Activated CD8-positive, alpha-beta T cell treated with anti-CD3 and anti-CD28 coated beads for 36 hours (primary cell): ENCODE measurements at regions of chr11 and their contacts with region 1.

Region 1: DNA sequence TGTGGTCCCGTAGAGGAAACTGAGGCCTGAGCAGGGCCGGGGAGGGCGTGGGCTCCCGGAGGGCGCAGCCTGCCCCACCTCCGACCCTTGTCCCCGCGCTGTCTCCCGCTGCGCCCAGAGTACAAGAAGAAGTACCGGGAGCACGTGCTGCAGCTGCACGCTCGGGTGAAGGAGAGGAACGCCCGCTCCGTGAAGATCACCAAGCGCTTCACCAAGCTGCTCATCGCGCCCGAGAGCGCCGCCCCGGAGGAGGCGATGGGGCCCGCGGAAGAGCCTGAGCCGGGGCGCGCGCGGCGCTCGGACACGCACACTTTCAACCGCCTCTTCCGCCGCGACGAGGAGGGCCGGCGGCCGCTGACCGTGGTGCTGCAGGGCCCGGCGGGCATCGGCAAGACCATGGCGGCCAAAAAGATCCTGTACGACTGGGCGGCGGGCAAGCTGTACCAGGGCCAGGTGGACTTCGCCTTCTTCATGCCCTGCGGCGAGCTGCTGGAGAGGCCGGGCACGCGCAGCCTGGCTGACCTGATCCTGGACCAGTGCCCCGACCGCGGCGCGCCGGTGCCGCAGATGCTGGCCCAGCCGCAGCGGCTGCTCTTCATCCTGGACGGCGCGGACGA is 1.9 kb downstream of the NLRP6 start:
- DNase-seq: peak; percentile 67
- ATAC-seq: peak; percentile 28
- H3K4me3 Mint-ChIP-seq: peak overlapping the region; percentile 82
- H3K27ac Mint-ChIP-seq: peak overlapping the region; percentile 68
- H3K4me1 Mint-ChIP-seq: peaks cover 54% of the 10 kb centered on the region
- H3K27me3 Mint-ChIP-seq: peaks cover 10% of the 10 kb centered on the region
- CTCF ChIP-seq: no peak

Region 2: GRCh38 chr11:236774-237767 is 43.0 kb before region 1 on chr11 and contains the start of gene PSMD13:
- CTCF ChIA-PET with region 1: no interaction called
- POLR2A ChIA-PET with region 1: interaction called, 10 read pairs
- intact Hi-C with region 1: no loop called
- DNase-seq: peak; percentile 94
- ATAC-seq: peak; percentile 87
- H3K4me3 Mint-ChIP-seq: peak within 1 kb of the TSS; percentile 95
- H3K27ac Mint-ChIP-seq: peak within 1 kb of the TSS; percentile 99
- H3K4me1 Mint-ChIP-seq: peaks cover 43% of the 10 kb centered on the region
- H3K27me3 Mint-ChIP-seq: no peaks in the 10 kb centered on the region
- CTCF ChIP-seq: no peak
- total RNA-seq, gene PSMD13: 220 to 228 TPM

Region 3: GRCh38 chr11:269146-269890 is 10.8 kb before region 1 on chr11:
- CTCF ChIA-PET with region 1: interaction called, 14 read pairs
- POLR2A ChIA-PET with region 1: interaction called, 75 read pairs
- intact Hi-C with region 1: no loop called
- DNase-seq: peak; percentile 72
- ATAC-seq: peak; percentile 38
- H3K4me3 Mint-ChIP-seq: peak overlapping the region; percentile 89
- H3K27ac Mint-ChIP-seq: peak overlapping the region; percentile 98
- H3K4me1 Mint-ChIP-seq: peaks cover 37% of the 10 kb centered on the region
- H3K27me3 Mint-ChIP-seq: no peaks in the 10 kb centered on the region
- CTCF ChIP-seq: peak; percentile 46

Region 4: GRCh38 chr11:299951-300735 is 20.1 kb after region 1 on chr11:
- CTCF ChIA-PET with region 1: interaction called, 44 read pairs
- POLR2A ChIA-PET with region 1: interaction called, 33 read pairs
- intact Hi-C with region 1: no loop called
- DNase-seq: peak; percentile 68
- ATAC-seq: peak; percentile 14
- H3K4me3 Mint-ChIP-seq: no peak overlapping the region
- H3K27ac Mint-ChIP-seq: no peak overlapping the region
- H3K4me1 Mint-ChIP-seq: peaks cover 49% of the 10 kb centered on the region
- H3K27me3 Mint-ChIP-seq: peaks cover 6% of the 10 kb centered on the region
- CTCF ChIP-seq: no peak

Region 5: GRCh38 chr11:304915-305843 is 25.1 kb after region 1 on chr11:
- CTCF ChIA-PET with region 1: interaction called, 44 read pairs
- POLR2A ChIA-PET with region 1: interaction called, 4 read pairs
- intact Hi-C with region 1: no loop called
- DNase-seq: peak; percentile 85
- ATAC-seq: peak; percentile 25
- H3K4me3 Mint-ChIP-seq: no peak overlapping the region
- H3K27ac Mint-ChIP-seq: no peak overlapping the region
- H3K4me1 Mint-ChIP-seq: peaks cover 49% of the 10 kb centered on the region
- H3K27me3 Mint-ChIP-seq: peaks cover 5% of the 10 kb centered on the region
- CTCF ChIP-seq: peak; percentile 86

Region 6: DNA sequence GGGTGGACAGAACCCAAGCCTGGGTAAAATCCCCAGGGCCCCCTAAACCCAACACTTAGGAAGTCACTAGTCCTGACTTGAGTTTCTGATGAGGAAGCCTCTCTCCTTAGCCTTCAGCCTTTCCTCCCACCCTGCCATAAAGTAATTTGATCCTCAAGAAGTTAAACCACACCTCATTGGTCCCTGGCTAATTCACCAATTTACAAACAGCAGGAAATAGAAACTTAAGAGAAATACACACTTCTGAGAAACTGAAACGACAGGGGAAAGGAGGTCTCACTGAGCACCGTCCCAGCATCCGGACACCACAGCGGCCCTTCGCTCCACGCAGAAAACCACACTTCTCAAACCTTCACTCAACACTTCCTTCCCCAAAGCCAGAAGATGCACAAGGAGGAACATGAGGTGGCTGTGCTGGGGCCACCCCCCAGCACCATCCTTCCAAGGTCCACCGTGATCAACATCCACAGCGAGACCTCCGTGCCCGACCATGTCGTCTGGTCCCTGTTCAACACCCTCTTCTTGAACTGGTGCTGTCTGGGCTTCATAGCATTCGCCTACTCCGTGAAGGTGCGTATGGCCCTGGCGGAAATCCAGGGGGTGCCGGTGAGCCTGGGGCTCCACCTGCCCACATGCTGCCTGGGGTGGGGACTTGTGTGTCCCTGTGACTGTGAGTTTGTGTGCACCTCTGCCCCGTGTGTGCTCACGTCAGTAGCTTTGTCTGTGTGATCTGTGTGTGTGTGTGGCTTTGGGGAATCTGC is 33.9 kb after region 1 on chr11 and contains the start of gene IFITM1:
- CTCF ChIA-PET with region 1: interaction called, 44 read pairs
- POLR2A ChIA-PET with region 1: interaction called, 35 read pairs
- intact Hi-C with region 1: no loop called
- DNase-seq: peak; percentile 79
- ATAC-seq: peak; percentile 45
- H3K4me3 Mint-ChIP-seq: peak within 1 kb of the TSS; percentile 83
- H3K27ac Mint-ChIP-seq: peak within 1 kb of the TSS; percentile 91
- H3K4me1 Mint-ChIP-seq: peaks cover 34% of the 10 kb centered on the region
- H3K27me3 Mint-ChIP-seq: no peaks in the 10 kb centered on the region
- CTCF ChIP-seq: no peak
- total RNA-seq, gene IFITM1: 296 to 304 TPM

Region 7: DNA sequence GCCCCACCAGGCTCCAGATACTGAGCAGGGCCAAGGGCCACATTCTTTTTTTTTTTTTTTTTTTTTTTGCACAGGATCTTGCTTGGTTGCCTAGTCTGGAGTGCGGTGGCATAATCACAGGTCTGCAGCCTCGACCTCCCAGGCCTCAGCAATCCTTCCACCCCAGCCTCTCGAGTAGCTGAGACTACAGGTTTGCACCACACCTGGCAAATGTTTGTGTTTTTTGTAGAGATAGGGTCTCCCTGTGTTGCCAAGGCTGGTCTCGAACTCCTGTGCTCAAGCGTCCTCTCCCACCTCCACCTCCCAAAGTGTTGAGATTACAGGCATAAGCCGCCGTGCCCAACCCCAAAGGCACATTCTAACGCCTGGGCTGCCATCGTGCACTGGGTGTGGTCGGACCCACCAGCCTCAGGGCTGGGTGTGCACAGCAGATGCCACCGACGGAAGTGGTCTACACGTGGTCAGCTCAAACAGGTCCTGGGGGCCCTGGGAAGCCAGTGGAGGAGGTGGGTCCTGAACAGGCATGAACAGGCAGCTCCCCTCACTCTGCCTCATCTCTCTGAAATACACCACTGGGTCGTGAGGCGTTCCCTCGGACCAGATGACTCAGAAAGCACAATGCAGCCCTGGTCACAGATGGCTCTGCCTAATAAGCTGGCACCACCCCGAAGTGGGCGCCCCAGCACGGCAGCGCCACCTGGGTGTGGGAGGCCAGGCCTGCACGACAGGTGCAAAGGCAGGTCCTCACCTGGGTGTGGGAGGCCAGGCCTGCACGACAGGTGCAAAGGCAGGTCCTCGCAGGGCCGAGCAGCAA is 84.1 kb after region 1 on chr11:
- CTCF ChIA-PET with region 1: interaction called, 27 read pairs
- POLR2A ChIA-PET with region 1: no interaction called
- intact Hi-C with region 1: no loop called
- DNase-seq: peak; percentile 72
- ATAC-seq: peak; percentile 81
- H3K4me3 Mint-ChIP-seq: no peak overlapping the region
- H3K27ac Mint-ChIP-seq: no peak overlapping the region
- H3K4me1 Mint-ChIP-seq: peaks cover 7% of the 10 kb centered on the region
- H3K27me3 Mint-ChIP-seq: peaks cover 27% of the 10 kb centered on the region
- CTCF ChIP-seq: peak; percentile 65